ENCODE measurements at regions of chr19 and their contacts with region 1.

Region 1: GRCh38 chr19:4208385-4209094 is 20.8 kb upstream of the EBI3 start:
- ATAC-seq: peak in 2 of 8 experiments; percentile 15 to 25
- H3K4me3 ChIP-seq: no peak overlapping the region
- H3K27ac ChIP-seq: no peak overlapping the region
- H3K4me1 ChIP-seq: no peaks in the 10 kb centered on the region

Region 2: GRCh38 chr19:3665681-3666544 is 542.6 kb before region 1 on chr19:
- in situ Hi-C with region 1: loop called in 2 of 9 experiments (anchors 25 kb)
- ATAC-seq: peak; percentile 2 to 52 (median 39)
- H3K4me3 ChIP-seq: no peak overlapping the region
- H3K27ac ChIP-seq: no peak overlapping the region
- H3K4me1 ChIP-seq: peaks cover 28 to 30% of the 10 kb centered on the region in 2 donors

Measured in motor neuron (in vitro differentiated cells).